Left cardiac atrium (tissue), 4 donors: ENCODE measurements at regions of chr7 and their contacts with region 1.

Region 1: DNA sequence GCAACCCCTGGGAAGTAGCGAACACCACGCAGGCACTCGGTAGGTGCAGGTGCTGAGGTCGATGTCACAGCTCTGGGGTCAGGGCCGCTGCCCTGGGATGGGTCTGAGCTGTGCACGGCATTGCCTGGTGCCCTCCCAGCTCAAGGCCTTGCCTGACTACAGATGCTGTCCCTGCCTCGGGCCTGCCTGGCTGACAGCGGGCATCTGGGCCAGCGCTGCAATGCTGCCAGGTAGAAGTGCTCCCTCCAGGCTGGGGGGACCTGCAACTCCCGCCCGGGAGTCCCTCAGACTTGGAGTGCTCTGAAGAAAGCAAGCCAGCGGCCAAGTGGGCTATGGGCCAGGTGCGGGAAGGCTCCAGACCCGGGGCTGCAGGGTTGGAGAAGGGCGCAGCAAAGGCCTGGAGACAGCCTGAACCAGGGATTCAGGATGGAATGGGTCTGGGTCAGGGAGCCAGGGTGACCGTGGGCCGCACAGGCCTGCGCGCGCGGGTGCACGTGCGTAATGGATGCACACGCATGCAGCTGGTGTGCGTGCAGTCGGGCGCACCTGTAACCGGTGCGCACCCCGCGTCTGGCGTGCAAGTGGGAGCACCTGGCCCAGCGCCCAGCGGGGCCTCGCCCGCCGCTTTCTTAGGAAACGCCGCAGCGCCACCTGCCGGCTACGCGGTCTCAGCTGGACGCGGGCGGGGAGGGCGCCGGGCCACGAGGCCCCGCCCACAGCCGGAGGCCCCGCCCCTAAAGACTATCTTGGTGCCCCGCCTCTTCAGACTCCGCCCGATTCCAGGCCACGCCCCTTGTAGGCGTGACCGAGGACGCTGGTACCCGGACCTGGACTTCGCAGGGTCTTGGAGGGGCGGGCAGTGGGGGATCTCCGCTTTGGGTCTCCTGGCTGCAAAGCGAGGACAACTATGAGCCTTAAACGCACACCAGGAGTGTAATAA is 46.7 kb downstream of the MICALL2 start:
- DNase-seq: peak; percentile 84
- ATAC-seq: peak; percentile 92 to 94

Region 2: GRCh38 chr7:1193593-1194424 is 218.8 kb before region 1 on chr7:
- intact Hi-C with region 1: loop called (anchors 5 to 10 kb)
- DNase-seq: no peak
- ATAC-seq: peak; percentile 84 to 90

Region 3: DNA sequence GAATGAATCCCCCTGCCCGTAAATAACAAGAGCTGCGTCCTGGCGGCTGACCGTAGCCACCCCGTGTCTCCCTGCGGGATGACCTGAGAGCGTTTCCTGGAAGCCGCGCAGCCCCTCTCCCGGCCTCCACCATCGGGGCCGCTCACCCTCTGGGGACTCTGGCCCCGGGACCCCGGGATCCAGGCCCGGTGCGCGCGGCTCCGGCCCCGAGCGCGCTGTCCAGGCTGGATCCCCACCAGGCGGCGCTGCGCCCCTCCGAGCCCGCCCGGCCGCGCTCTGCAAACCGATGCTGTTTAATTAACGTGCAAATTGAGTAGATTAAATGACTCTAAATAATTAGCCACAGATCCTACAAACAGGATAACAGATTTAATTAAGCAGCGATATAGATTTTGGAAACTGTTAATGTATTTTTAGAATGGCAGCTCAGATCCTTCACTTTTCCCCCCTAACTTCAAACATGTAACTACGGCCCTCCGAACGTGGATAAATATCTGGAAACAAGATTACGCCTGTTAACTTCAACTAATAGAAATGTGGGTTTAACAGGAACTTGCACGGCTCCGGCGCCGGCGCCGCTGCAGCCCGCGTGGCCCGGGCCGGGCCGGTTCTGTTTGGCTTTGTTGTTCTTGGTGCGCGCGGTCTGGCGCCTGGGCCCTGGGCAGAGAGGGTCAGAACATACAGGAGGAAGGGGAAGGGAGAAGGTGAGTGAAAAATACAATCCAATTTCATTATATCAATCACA is 187.0 kb before region 1 on chr7:
- intact Hi-C with region 1: loop called in 1 of 2 experiments (anchors 10 kb)
- DNase-seq: no peak
- ATAC-seq: peak; percentile 42 to 51

Region 4: DNA sequence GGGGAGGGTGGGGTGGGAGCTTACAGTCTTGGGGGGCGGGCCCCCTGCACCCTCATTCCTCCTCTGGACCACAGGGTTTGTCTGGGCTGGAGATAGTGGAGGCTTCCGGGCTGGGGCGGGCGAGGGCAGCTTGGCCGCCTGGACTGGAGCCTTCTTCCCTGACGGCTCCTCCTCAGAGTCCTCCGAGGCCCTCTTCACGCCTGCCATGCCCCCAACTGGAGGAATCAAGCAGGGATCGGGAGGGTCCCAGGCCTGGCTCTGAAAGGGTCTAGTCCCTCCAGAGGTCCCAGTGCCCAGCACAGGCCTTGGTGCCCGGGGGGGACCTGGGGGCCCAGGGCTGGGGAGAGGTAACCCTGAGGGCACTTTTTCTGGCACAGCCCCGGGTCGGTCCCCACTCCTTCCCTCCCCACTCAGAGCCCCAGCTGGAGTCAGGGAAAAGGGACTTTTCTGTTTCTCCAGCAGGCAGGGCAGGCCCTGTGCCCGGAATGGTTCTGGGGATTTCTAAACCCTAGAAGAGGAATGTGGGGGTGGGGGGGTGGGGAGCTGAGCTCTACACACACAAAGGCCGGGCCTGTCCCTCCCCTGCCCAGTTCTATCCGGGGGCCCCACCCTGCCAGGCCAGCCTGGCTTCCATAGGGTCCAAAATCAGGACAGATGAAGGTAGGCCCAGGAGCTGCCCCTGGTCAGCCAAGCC is 35.1 kb after region 1 on chr7:
- intact Hi-C with region 1: no loop called
- DNase-seq: no peak
- ATAC-seq: peak in 1 of 2 donors; percentile 69

Region 5: DNA sequence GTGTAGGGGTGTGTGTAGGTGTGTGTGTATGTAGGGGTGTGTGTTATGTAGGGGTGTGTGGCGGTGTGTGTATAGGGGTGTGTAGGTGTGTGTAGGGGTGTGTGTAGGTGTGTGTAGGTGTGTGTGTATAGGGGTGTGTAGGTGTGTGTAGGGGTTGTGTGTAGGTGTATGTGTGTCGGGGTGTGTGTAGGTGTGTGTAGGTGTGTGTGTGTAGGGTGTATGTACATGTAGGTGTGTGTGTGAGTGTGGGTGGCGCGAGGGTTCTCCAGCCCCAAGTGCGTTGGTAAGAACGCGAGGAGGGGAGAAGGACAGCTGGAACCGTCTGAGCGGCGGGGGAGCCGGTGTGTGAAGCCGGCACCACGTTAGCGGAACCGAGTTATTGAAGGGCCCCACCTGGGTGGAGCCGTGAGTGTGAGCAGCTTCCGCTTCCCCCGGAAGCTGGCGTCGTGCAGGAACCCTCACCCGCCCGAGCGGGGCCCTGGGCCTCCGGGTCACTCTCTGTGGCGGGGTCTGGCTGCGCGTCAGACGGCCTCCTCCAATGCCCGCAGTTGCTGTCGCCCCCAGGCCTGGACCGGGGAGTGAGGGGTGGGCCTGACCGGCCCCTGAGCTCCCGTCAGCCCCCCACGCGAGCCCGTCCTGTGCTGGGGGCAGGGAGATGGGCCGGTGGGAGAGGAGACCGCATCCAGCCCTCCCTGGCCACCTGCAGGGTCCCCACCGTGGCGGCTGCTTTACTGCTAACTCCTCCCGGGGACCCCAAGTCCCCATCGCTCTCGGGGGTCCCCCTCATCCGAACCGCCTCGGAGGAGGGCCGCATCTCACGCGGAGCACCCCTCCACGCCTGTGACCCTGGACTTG is 206.8 kb after region 1 on chr7:
- intact Hi-C with region 1: no loop called
- DNase-seq: no peak
- ATAC-seq: no peak